CD4-positive, alpha-beta T cell (primary cell): ENCODE measurements at regions of chr2 and their contacts with region 1.

Region 1: GRCh38 chr2:136384531-136385303 is 266.8 kb upstream of the CXCR4 start:
- DNase-seq: peak; percentile 27 to 83 (median 46)
- ATAC-seq: peak; percentile 57
- H3K4me3 ChIP-seq: no peak overlapping the region
- H3K4me3 Mint-ChIP-seq: no peak overlapping the region
- H3K27ac ChIP-seq: no peak overlapping the region
- H3K27ac Mint-ChIP-seq: peak overlapping the region; percentile 79
- H3K4me1 ChIP-seq: peaks cover 24% of the 10 kb centered on the region
- H3K4me1 Mint-ChIP-seq: peaks cover 37% of the 10 kb centered on the region
- H3K27me3 ChIP-seq: no peaks in the 10 kb centered on the region
- H3K27me3 Mint-ChIP-seq: no peaks in the 10 kb centered on the region
- CTCF ChIP-seq: peak; percentile 67

Region 2: DNA sequence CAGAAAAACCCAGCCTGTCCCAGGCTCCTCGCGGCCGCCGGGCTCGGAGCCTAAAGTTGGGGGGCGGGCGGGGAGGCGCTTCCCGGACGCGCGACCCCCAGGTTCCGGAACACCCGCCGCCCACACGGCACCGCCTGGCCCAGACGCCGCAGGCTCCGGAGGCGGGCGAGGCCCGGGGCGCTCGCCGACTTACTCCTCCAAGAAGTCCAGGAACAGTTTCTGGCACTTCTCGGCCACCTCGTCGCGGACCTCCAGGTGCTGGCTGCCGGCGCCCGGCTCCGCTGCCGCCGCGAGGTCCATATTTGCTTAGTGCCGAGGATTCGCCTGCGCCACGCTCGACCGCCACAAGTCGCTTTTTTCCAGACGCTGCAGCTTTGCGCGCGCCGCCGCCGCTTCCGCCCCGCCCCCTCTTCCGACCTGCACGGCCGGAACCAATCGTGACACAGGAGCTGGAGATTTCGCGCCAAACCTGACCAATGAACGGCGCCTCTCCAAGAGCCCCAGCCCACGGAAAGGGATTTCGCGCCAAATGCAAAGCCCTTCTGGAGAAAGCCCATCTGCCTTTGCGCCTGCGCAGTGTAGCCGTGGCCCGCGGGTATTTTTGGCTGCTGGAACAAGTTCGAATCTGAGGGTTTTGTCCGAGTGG is 508.5 kb before region 1 on chr2 and contains the start of gene MCM6:
- CTCF ChIA-PET with region 1: no interaction called
- POLR2A ChIA-PET with region 1: interaction called, 11 read pairs
- intact Hi-C with region 1: loop called in 1 of 2 experiments (anchors 1 kb)
- DNase-seq: peak; percentile 94 to 100 (median 96)
- ATAC-seq: peak; percentile 89
- H3K4me3 ChIP-seq: peak within 1 kb of the TSS; percentile 94
- H3K4me3 Mint-ChIP-seq: peak within 1 kb of the TSS; percentile 97
- H3K27ac ChIP-seq: peak within 1 kb of the TSS; percentile 76 to 83
- H3K27ac Mint-ChIP-seq: peak within 1 kb of the TSS; percentile 99
- H3K4me1 ChIP-seq: peaks cover 19% of the 10 kb centered on the region
- H3K4me1 Mint-ChIP-seq: peaks cover 48% of the 10 kb centered on the region
- H3K27me3 ChIP-seq: no peaks in the 10 kb centered on the region
- H3K27me3 Mint-ChIP-seq: no peaks in the 10 kb centered on the region
- CTCF ChIP-seq: no peak
- total RNA-seq, gene MCM6: 31.5 to 34.4 TPM

Region 3: DNA sequence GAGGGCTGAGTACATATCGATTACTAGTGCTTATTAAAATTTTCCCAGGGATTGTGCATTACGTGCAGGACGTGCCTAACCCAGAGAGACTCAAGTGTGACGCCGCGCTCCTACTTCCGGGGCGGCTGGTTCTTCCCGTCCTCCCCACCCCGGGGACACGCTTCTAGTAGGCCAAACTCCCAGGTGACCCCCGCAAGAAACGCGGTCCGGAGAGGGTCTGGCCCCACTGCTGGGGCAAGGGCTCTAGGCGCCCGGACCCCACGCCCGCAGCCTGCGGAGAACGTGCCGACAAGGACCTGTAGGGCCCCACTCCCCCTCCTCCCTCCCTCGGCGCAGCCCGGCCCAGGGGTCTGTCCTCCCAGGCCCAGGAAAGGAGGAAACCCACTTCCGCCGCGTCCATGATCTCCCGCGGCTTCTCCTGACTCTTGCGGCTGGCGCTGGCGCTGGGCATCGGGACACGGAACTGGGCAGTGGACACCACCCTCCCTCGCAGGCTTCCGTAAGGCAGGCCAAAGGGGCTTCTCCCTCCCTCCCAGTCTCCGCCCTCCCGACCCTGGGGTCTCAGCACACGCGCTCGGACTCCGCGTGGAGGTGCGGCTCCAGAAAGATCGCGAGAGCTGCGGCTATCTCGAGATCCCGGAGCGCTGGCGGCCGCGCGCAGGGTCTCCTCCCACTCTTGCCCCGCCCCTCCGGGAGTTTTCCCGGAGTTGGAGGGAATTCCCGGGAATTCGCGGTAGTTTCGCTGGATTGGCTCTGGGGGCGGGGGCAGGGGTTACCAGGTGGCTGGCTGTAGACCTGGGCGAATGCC is 399.5 kb before region 1 on chr2 and contains the start of gene DARS1:
- CTCF ChIA-PET with region 1: interaction called, 4 read pairs
- POLR2A ChIA-PET with region 1: interaction called, 8 read pairs
- intact Hi-C with region 1: loop called (anchors 1 to 5 kb)
- DNase-seq: peak; percentile 59 to 91 (median 68)
- ATAC-seq: peak; percentile 82
- H3K4me3 ChIP-seq: peak within 1 kb of the TSS; percentile 84
- H3K4me3 Mint-ChIP-seq: peak within 1 kb of the TSS; percentile 99
- H3K27ac ChIP-seq: peak within 1 kb of the TSS; percentile 95 to 98
- H3K27ac Mint-ChIP-seq: peak within 1 kb of the TSS; percentile 99
- H3K4me1 ChIP-seq: peaks cover 7% of the 10 kb centered on the region
- H3K4me1 Mint-ChIP-seq: peaks cover 50% of the 10 kb centered on the region
- H3K27me3 ChIP-seq: no peaks in the 10 kb centered on the region
- H3K27me3 Mint-ChIP-seq: no peaks in the 10 kb centered on the region
- CTCF ChIP-seq: no peak
- total RNA-seq, gene DARS1: 38.2 to 41.7 TPM

Region 4: DNA sequence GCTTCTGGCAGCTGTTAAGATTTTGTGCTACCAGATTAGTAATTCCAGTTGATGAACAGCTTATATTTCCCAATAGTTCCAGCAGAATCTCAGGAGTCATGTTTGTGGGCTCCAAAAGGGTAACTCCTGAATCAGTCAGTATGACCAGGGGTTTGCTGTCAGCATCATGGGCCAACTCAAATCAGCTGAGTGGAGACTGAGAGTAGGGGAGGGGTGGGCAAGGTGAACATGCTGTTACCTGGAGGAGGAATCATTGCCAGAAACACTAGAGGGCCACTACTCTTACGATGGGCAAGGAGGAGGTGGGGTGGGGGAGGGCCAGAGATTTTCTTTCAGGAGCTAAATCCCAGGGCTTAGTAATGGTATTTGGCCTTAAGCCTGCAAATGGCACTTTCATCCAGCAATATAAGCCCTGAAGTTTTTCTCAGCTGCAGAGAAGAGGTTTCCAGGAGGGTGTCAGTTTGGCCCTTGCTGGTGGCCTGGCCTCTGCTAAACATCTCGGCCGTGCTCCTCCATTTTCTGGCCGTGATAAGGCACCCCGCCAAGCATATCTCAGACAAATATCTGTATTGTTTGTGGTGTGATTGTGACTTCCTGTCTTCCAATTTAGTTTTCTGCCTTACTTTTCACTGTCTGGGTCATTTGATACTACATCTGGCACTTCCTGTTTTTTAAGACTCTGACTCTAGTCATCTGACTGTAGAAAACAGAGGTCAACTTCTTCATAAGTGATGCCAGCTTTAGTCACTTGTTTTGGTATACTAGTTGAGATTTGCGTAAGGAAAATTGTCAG is 146.2 kb before region 1 on chr2:
- CTCF ChIA-PET with region 1: interaction called, 15 read pairs
- POLR2A ChIA-PET with region 1: interaction called, 6 read pairs
- intact Hi-C with region 1: loop called in 1 of 2 experiments (anchors 1 kb)
- DNase-seq: peak; percentile 31 to 87 (median 46)
- ATAC-seq: peak; percentile 80
- H3K4me3 ChIP-seq: no peak overlapping the region
- H3K4me3 Mint-ChIP-seq: peak overlapping the region; percentile 2
- H3K27ac ChIP-seq: peak overlapping the region; percentile 68 to 75
- H3K27ac Mint-ChIP-seq: peak overlapping the region; percentile 83
- H3K4me1 ChIP-seq: peaks cover 49% of the 10 kb centered on the region
- H3K4me1 Mint-ChIP-seq: peaks cover 58% of the 10 kb centered on the region
- H3K27me3 ChIP-seq: no peaks in the 10 kb centered on the region
- H3K27me3 Mint-ChIP-seq: no peaks in the 10 kb centered on the region
- CTCF ChIP-seq: no peak

Region 5: GRCh38 chr2:136423516-136423996 is 38.8 kb after region 1 on chr2:
- CTCF ChIA-PET with region 1: no interaction called
- POLR2A ChIA-PET with region 1: no interaction called
- intact Hi-C with region 1: no loop called
- DNase-seq: peak; percentile 63 to 88 (median 72)
- ATAC-seq: peak; percentile 96
- H3K4me3 ChIP-seq: peak overlapping the region; percentile 56
- H3K4me3 Mint-ChIP-seq: peak overlapping the region; percentile 85
- H3K27ac ChIP-seq: no peak overlapping the region
- H3K27ac Mint-ChIP-seq: no peak overlapping the region
- H3K4me1 ChIP-seq: peaks cover 18% of the 10 kb centered on the region
- H3K4me1 Mint-ChIP-seq: peaks cover 15% of the 10 kb centered on the region
- H3K27me3 ChIP-seq: peaks cover 0 to 12% of the 10 kb centered on the region in 2 experiments
- H3K27me3 Mint-ChIP-seq: peaks cover 68% of the 10 kb centered on the region
- CTCF ChIP-seq: peak; percentile 93